ENCODE measurements at regions of chr10 and their contacts with region 1.

Region 1: GRCh38 chr10:107914450-107915214 is 750.1 kb upstream of the SORCS1 start:
- DNase-seq: no peak
- ATAC-seq: no peak
- H3K4me3 ChIP-seq: no peak overlapping the region
- H3K4me3 Mint-ChIP-seq: no peak overlapping the region
- H3K27ac ChIP-seq: no peak overlapping the region
- H3K27ac Mint-ChIP-seq: no peak overlapping the region
- H3K4me1 ChIP-seq: no peaks in the 10 kb centered on the region
- H3K4me1 Mint-ChIP-seq: no peaks in the 10 kb centered on the region
- H3K27me3 ChIP-seq: peaks cover 0 to 8% of the 10 kb centered on the region in 2 experiments
- H3K27me3 Mint-ChIP-seq: peaks cover 15% of the 10 kb centered on the region
- CTCF ChIP-seq: no peak

Region 2: GRCh38 chr10:107971973-107972372 is 57.3 kb after region 1 on chr10:
- CTCF ChIA-PET with region 1: no interaction called
- POLR2A ChIA-PET with region 1: no interaction called
- intact Hi-C with region 1: loop called in 1 of 2 experiments (anchors 2 kb)
- DNase-seq: no peak
- ATAC-seq: no peak
- H3K4me3 ChIP-seq: no peak overlapping the region
- H3K4me3 Mint-ChIP-seq: no peak overlapping the region
- H3K27ac ChIP-seq: no peak overlapping the region
- H3K27ac Mint-ChIP-seq: no peak overlapping the region
- H3K4me1 ChIP-seq: no peaks in the 10 kb centered on the region
- H3K4me1 Mint-ChIP-seq: no peaks in the 10 kb centered on the region
- H3K27me3 ChIP-seq: no peaks in the 10 kb centered on the region
- H3K27me3 Mint-ChIP-seq: no peaks in the 10 kb centered on the region
- CTCF ChIP-seq: no peak